GM10248 (cell line): ENCODE measurements at regions of chr13 and their contacts with region 1.

Region 1: GRCh38 chr13:46106839-46107371 is 2.1 kb upstream of the CPB2 start:
- DNase-seq: no peak
- CTCF ChIP-seq: no peak

Region 2: DNA sequence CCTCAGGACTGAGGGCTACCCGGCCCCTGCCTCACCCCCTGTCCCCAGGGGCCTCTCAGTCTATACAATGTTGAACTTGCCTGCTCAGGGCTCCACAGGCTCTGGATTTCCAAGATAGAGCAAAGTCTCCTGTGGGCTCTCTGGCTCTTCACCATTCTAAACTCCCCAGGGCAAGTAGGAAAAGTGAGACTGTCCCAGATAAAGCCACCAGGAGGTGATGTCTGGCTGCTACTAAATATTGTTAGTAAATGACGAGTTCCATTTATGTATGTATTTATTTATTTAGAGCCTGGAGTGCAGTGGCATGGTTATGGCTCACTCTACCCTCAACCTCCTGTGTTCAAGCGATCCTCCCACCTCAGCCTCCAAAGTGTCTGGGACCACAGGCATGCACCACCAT is 181.8 kb before region 1 on chr13:
- CTCF ChIA-PET with region 1: no interaction called
- POLR2A ChIA-PET with region 1: no interaction called
- DNase-seq: no peak
- CTCF ChIP-seq: peak; percentile 18

Region 3: GRCh38 chr13:46004491-46004890 is 102.4 kb before region 1 on chr13:
- CTCF ChIA-PET with region 1: no interaction called
- POLR2A ChIA-PET with region 1: no interaction called
- DNase-seq: no peak
- CTCF ChIP-seq: no peak

Region 4: GRCh38 chr13:46119883-46120614 is 13.1 kb after region 1 on chr13:
- CTCF ChIA-PET with region 1: interaction called, 64 read pairs
- POLR2A ChIA-PET with region 1: no interaction called
- DNase-seq: no peak
- CTCF ChIP-seq: no peak